Stomach (tissue), 19 donors: ENCODE measurements at regions of chr2 and their contacts with region 1.

Region 1: GRCh38 chr2:135913727-135914365 is 37.6 kb upstream of the MCM6 start:
- DNase-seq: peak in 1 of 2 donors; percentile 75
- H3K4me3 ChIP-seq: no peak overlapping the region
- H3K27ac ChIP-seq: no peak overlapping the region
- H3K4me1 ChIP-seq: peaks cover 0 to 5% (median 0%) of the 10 kb centered on the region in 4 donors
- H3K27me3 ChIP-seq: no peaks in the 10 kb centered on the region
- CTCF ChIP-seq: peak in 5 of 7 experiments; percentile 25 to 80 (median 64)
- EP300 ChIP-seq: no peak
- POLR2A ChIP-seq: no peak

Region 2: GRCh38 chr2:135494503-135494902 is 419.3 kb before region 1 on chr2:
- intact Hi-C with region 1: no loop called
- DNase-seq: no peak
- H3K4me3 ChIP-seq: no peak overlapping the region
- H3K27ac ChIP-seq: no peak overlapping the region
- H3K4me1 ChIP-seq: no peaks in the 10 kb centered on the region
- H3K27me3 ChIP-seq: no peaks in the 10 kb centered on the region
- CTCF ChIP-seq: no peak
- EP300 ChIP-seq: no peak
- POLR2A ChIP-seq: no peak

Region 3: DNA sequence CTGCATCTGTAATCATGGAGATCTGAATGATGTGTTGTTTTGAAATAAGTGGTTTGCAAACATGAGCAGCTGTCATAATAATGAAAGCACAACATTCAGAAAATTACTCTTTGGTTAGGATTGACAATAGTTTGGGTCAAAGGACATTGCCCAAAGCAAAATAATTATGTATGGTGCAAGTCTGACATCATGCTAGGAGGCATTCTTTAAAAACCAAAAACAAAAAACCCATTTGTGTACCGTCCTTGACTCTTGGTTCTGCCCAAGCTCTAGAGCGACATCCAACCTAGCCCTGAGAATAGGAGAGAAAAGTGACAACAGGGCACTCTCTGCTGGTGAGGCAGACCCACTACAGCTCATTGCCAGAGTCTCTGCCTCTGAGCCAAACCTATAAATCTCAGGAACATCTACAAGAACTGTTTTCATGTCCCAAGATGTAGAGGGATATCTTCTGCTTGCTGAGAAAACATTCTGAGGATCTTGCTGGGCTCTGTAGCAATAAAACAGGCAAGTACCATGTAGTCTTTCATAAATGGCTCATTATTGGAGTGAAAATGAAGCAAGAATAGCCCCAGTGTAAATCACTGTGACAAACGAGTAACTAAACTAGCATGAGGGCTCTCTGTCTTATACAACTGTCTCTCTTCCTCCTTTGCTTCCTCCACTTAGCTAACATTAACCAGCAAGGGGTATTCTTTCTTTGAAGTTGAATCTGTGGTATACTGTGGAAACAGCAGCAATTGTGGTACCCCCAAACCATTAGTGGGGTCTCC is 470.9 kb after region 1 on chr2:
- intact Hi-C with region 1: loop called (anchors 5 kb)
- DNase-seq: peak in 1 of 2 donors; percentile 77
- H3K4me3 ChIP-seq: no peak overlapping the region
- H3K27ac ChIP-seq: no peak overlapping the region
- H3K4me1 ChIP-seq: peaks cover 0 to 6% (median 2%) of the 10 kb centered on the region in 4 donors
- H3K27me3 ChIP-seq: no peaks in the 10 kb centered on the region
- CTCF ChIP-seq: peak in 4 of 7 experiments; percentile 19 to 52 (median 40)
- EP300 ChIP-seq: no peak
- POLR2A ChIP-seq: no peak